ENCODE measurements at regions of chr2 and their contacts with region 1.

Region 1: DNA sequence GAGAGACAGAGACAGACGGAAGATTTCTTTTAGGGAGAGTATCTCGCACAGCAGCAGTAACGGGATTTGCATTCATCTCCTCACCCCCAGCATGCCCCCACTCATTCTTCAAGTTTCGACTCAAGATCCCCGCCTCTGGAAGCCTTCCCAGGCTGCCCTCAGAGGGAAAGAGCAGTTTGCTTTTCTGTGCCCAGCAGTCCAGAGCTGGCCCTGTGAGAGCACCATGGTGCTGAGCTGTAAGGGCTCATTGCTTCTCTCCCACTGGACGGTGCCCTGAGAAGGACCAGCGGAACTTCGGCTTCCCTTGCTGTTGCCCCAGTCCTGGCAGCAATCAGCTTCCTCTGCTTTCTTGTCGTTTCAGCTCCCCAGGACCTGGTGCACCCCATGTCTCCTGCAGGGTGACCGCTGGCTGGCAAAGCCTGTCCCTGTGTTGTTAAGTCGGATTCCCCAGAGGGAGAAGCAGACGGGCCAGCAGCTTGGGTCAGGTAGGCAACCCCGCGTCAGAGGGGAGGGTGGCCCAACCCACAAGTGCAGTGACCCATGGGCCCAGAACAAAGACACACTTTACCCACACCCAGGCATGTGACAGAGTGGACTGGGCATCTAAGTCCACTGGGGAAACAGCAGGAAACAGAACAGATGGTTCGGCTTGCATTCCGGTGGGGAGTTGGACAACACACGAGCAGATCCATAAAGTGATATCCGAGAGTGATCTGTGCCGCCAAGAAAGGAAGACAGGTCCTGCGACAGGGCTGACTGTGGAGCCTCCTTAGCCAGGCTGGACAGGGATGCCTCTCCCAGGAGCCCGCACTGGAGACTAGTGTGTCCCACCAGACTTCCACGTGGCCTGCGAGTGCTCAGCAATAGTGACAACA is 36.6 kb downstream of the TMEM177 start:
- DNase-seq: no peak
- ATAC-seq: peak in 1 of 4 donors; percentile 21
- H3K4me3 ChIP-seq: no peak overlapping the region
- H3K27ac ChIP-seq: no peak overlapping the region
- H3K4me1 ChIP-seq: peaks cover 0 to 11% (median 4%) of the 10 kb centered on the region in 12 donors
- H3K27me3 ChIP-seq: no peaks in the 10 kb centered on the region
- CTCF ChIP-seq: no peak
- POLR2A ChIP-seq: no peak

Region 2: GRCh38 chr2:119741868-119742267 is 26.2 kb after region 1 on chr2:
- intact Hi-C with region 1: loop called in 1 of 10 experiments (anchors 2 kb)
- DNase-seq: no peak
- ATAC-seq: no peak
- H3K4me3 ChIP-seq: no peak overlapping the region
- H3K27ac ChIP-seq: no peak overlapping the region
- H3K4me1 ChIP-seq: peaks cover 0 to 3% (median 0%) of the 10 kb centered on the region in 12 donors
- H3K27me3 ChIP-seq: no peaks in the 10 kb centered on the region
- CTCF ChIP-seq: no peak
- POLR2A ChIP-seq: no peak

Measured in heart left ventricle (tissue), 16 donors.